ENCODE measurements at regions of chr11 and their contacts with region 1.

Region 1: GRCh38 chr11:27158722-27159679 is 118.4 kb downstream of the BBOX1 start:
- DNase-seq: peak in 1 of 2 experiments; percentile 33
- H3K4me3 ChIP-seq: no peak overlapping the region
- H3K27ac ChIP-seq: no peak overlapping the region
- H3K4me1 ChIP-seq: no peaks in the 10 kb centered on the region
- H3K27me3 ChIP-seq: no peaks in the 10 kb centered on the region
- CTCF ChIP-seq: peak in 2 of 3 experiments; percentile 71 to 76; a peak in 3 of 4 replicates
- EP300 ChIP-seq: no peak
- POLR2A ChIP-seq: no peak
- RAD21 ChIP-seq: peak; percentile 94

Region 2: GRCh38 chr11:26741036-26741435 is 418.0 kb before region 1 on chr11:
- CTCF ChIA-PET with region 1: interaction called, 11 read pairs
- POLR2A ChIA-PET with region 1: no interaction called
- DNase-seq: no peak
- H3K4me3 ChIP-seq: no peak overlapping the region
- H3K27ac ChIP-seq: no peak overlapping the region
- H3K4me1 ChIP-seq: no peaks in the 10 kb centered on the region
- H3K27me3 ChIP-seq: no peaks in the 10 kb centered on the region
- CTCF ChIP-seq: no peak
- EP300 ChIP-seq: no peak
- POLR2A ChIP-seq: no peak
- RAD21 ChIP-seq: no peak

Region 3: GRCh38 chr11:26761361-26761809 is 397.6 kb before region 1 on chr11:
- CTCF ChIA-PET with region 1: interaction called, 77 read pairs
- POLR2A ChIA-PET with region 1: no interaction called
- DNase-seq: no peak
- H3K4me3 ChIP-seq: no peak overlapping the region
- H3K27ac ChIP-seq: no peak overlapping the region
- H3K4me1 ChIP-seq: no peaks in the 10 kb centered on the region
- H3K27me3 ChIP-seq: no peaks in the 10 kb centered on the region
- CTCF ChIP-seq: no peak
- EP300 ChIP-seq: no peak
- POLR2A ChIP-seq: no peak
- RAD21 ChIP-seq: no peak

Region 4: DNA sequence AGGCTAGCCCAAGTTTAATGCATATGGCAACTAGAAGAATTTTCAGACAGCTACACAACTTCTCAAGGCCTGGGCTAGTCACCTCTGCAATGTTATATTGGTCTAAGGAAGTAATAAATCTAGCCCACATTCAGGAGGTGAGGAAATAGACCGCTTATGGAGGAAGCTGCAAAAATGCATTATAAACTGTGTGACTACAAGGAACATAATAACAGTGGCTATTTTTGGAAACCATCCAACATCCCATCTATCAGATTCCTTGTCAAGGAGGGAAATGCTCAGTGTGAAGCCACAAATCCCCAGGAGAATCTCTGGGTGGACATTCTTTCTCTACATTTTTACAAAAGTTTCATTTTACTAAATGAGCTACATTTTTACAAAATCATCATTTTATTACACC is 42.3 kb before region 1 on chr11:
- CTCF ChIA-PET with region 1: no interaction called
- POLR2A ChIA-PET with region 1: no interaction called
- DNase-seq: no peak
- H3K4me3 ChIP-seq: no peak overlapping the region
- H3K27ac ChIP-seq: no peak overlapping the region
- H3K4me1 ChIP-seq: no peaks in the 10 kb centered on the region
- H3K27me3 ChIP-seq: no peaks in the 10 kb centered on the region
- CTCF ChIP-seq: no peak
- EP300 ChIP-seq: no peak
- POLR2A ChIP-seq: no peak
- RAD21 ChIP-seq: no peak

Region 5: DNA sequence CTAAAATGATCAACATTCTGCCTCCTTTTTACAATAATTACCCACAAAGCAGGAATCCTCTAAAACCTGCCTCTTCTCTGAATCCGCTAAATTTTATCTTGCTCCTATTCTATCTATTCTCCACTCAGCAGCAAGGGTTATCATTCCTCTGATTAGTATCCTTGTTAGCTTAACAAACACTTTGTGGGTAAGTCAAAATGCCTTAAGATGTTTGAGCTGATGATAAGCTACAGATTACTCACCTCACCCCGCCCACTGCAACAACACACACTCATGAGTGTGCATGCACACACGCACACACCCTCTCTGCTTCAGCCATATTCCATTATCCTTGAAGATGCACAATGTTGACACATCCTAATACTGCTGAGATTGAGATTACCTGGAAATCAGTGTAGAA is 12.4 kb after region 1 on chr11:
- CTCF ChIA-PET with region 1: interaction called, 11 read pairs
- POLR2A ChIA-PET with region 1: interaction called, 4 read pairs
- DNase-seq: no peak
- H3K4me3 ChIP-seq: no peak overlapping the region
- H3K27ac ChIP-seq: no peak overlapping the region
- H3K4me1 ChIP-seq: no peaks in the 10 kb centered on the region
- H3K27me3 ChIP-seq: peaks cover 0 to 1% (median 0%) of the 10 kb centered on the region in 4 experiments; a peak in 1 of 7 replicates
- CTCF ChIP-seq: no peak
- EP300 ChIP-seq: no peak
- POLR2A ChIP-seq: no peak
- RAD21 ChIP-seq: no peak

Measured in H1 (cell line).